ENCODE measurements at regions of chr3 and their contacts with region 1.

Region 1: GRCh38 chr3:45938864-45939263 is 4.4 kb upstream of the CXCR6 start:
- DNase-seq: peak; percentile 81
- ATAC-seq: peak; percentile 91
- H3K4me3 Mint-ChIP-seq: no peak overlapping the region
- H3K27ac Mint-ChIP-seq: 0 out of 2 replicates have a peak overlapping the region, but pooled peaks have one; percentile 6
- H3K4me1 Mint-ChIP-seq: peaks cover 17% of the 10 kb centered on the region
- H3K27me3 Mint-ChIP-seq: no peaks in the 10 kb centered on the region
- CTCF ChIP-seq: peak; percentile 77

Region 2: DNA sequence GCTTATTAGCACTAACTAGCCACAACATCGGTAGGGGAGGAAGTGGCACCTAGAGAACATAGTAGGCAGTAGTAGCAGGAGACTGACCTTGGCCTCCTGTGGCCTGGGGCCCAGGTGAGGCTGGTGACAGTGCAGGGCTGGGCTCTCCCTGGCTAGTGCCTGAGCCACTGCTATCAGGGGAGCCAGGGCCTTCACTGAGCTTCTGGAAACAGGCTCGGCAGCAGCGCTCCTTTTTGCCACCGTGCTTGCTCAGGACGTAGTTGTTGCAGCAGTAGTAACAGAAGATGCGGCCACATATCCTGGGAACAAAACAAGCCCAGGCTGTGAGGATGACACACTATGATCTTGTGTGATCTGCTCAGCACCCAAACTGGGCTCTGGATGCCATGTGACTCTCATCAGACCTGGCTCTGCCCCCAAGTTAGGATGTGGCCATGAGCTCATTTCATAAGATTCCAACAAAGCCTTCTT is 19.5 kb after region 1 on chr3:
- CTCF ChIA-PET with region 1: interaction called, 10 read pairs
- POLR2A ChIA-PET with region 1: no interaction called
- DNase-seq: no peak
- ATAC-seq: no peak
- H3K4me3 Mint-ChIP-seq: no peak overlapping the region
- H3K27ac Mint-ChIP-seq: no peak overlapping the region
- H3K4me1 Mint-ChIP-seq: no peaks in the 10 kb centered on the region
- H3K27me3 Mint-ChIP-seq: no peaks in the 10 kb centered on the region
- CTCF ChIP-seq: no peak

Region 3: DNA sequence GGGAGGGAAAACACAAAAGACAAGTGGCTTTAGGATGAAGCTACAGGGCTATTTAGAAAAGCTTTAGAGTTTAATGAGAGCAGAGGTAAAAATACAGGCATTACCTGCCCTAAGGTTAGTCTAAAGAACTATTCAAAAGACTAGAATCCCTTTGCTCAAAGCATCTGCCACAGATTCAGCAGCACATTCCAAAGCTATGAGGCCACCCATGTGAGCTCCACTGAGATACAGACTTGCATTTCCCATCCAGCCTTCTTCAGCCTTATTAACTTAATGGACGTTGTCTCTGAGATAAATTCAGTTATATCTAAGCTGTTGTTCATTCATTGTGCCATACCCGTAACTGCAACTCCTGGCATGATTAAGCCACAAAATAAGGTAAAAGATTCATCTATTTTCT is 29.8 kb after region 1 on chr3:
- CTCF ChIA-PET with region 1: interaction called, 25 read pairs
- POLR2A ChIA-PET with region 1: no interaction called
- DNase-seq: no peak
- ATAC-seq: no peak
- H3K4me3 Mint-ChIP-seq: no peak overlapping the region
- H3K27ac Mint-ChIP-seq: no peak overlapping the region
- H3K4me1 Mint-ChIP-seq: no peaks in the 10 kb centered on the region
- H3K27me3 Mint-ChIP-seq: no peaks in the 10 kb centered on the region
- CTCF ChIP-seq: no peak

Region 4: GRCh38 chr3:46008058-46008457 is 69.2 kb after region 1 on chr3:
- CTCF ChIA-PET with region 1: no interaction called
- POLR2A ChIA-PET with region 1: no interaction called
- DNase-seq: no peak
- ATAC-seq: no peak
- H3K4me3 Mint-ChIP-seq: no peak overlapping the region
- H3K27ac Mint-ChIP-seq: no peak overlapping the region
- H3K4me1 Mint-ChIP-seq: peaks cover 28% of the 10 kb centered on the region
- H3K27me3 Mint-ChIP-seq: peaks cover 3% of the 10 kb centered on the region; the same call in 1 of the 2 replicates
- CTCF ChIP-seq: no peak